ENCODE measurements at regions of chr3 and their contacts with region 1.

Region 1: DNA sequence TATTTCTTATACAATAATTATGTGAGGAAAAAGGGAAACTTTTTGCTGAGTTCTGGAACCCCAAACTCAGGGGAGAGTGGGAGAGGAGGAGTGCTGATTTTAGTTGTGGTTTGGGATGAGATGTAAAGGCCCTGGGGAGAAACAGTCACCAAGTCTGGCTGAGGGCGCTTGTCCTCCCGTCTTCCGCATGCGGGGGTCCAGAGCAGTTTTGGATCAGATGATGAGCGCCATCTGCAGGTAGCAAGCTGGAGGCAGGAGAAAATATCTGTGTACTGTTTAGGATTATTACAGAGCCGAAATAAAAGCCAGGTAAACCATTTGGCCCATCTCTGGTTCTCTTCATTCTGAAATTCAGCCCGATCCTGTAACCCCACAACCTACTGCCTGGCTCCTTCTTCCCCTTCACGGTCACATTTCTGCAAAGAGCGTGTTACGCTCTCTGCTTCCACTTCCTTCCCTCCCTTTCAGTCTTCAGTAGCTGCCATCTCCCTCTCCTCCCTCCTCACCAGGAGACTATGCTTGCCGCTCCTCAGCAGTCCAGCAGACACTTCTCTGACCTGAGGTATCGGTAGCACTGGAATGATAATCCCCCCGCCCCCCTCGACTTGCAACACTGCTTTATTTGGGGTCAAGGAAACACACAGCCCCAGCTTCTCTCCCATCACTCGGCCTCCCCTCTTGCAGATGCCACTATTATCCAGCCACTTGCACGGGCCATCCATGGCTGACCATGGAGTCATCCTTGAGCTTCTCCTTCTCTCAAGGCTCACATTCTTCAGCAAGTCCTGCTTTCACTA is 1.4 kb upstream of the PARP14 start:
- DNase-seq: peak; percentile 81
- H3K4me3 ChIP-seq: peak overlapping the region in 1 of 2 donors; percentile 73
- H3K27ac ChIP-seq: peak overlapping the region; percentile 96
- H3K4me1 ChIP-seq: no peaks in the 10 kb centered on the region
- H3K27me3 ChIP-seq: no peaks in the 10 kb centered on the region
- CTCF ChIP-seq: peak; percentile 70 to 93 (median 90)
- POLR2A ChIP-seq: no peak

Region 2: DNA sequence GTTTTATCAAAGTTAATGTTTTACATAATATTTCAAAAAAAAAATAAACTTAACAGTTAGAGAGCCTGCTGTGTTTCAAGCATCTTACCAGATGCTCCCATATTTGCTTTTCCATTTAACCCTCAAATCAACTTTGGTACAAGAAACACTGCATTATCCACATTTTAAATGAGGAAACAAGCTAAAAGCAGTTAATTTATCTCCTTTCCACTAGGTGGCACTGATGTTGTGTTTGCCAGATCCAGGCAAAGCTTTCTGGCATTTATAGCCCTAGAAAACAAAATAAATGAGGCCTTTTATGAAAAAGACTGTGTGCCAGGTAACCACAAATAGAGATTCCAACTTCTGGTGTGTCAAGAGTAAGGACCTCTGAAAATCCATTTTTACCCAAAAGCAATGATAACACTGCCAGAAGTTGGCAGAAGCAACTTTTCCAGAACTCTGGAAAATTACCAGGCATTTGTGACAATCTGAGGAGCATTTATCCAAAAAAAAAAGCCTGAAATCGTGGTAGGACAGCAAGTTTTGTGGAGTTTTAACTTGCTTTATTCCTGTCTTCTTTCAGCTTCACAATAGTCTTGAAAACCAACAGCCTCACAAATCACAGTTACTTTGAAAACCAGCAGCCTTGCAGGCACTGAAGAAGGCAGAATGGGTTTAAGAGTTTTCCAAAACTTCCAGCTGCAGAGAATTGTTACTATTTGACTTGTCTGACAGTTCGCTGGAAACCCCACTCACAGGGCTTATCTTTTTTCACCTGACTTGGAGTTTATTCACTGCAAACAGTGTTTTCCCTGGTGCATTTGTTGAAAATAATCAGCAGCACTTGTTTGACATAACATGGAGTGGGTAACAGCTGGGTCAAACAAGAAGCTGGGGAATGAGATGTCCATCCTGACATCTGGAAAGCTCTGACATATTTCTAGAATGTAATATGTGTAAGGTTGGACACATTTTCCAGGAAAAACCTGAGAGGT is 286.1 kb before region 1 on chr3:
- intact Hi-C with region 1: loop called (anchors 5 kb)
- DNase-seq: no peak
- H3K4me3 ChIP-seq: no peak overlapping the region
- H3K27ac ChIP-seq: peak overlapping the region; percentile 13 to 16
- H3K4me1 ChIP-seq: no peaks in the 10 kb centered on the region
- H3K27me3 ChIP-seq: no peaks in the 10 kb centered on the region
- CTCF ChIP-seq: peak; percentile 18 to 79 (median 64)
- POLR2A ChIP-seq: no peak

Region 3: DNA sequence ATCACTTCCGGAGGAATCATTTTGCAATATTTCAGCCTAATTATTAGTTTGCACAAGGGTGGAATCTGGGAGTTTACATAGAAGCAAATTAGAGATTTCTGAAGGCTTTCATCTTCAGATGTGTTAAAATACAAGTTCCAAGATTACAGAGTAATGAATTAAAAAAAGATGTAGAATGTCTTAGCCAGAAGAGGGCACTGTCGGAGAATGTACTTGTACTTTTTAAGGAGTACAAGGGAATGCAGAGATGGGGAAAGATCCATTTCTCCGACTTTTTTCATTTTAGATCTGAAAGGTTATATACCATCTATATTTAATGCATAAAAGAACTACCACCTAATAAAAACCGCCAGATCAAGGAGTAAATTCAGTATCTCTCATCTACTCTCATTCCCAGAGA is 220.3 kb before region 1 on chr3:
- intact Hi-C with region 1: loop called (anchors 2 kb)
- DNase-seq: no peak
- H3K4me3 ChIP-seq: no peak overlapping the region
- H3K27ac ChIP-seq: no peak overlapping the region
- H3K4me1 ChIP-seq: no peaks in the 10 kb centered on the region
- H3K27me3 ChIP-seq: no peaks in the 10 kb centered on the region
- CTCF ChIP-seq: peak in 3 of 4 experiments; percentile 40 to 55 (median 47)
- POLR2A ChIP-seq: no peak

Region 4: GRCh38 chr3:122564155-122564912 is 114.9 kb before region 1 on chr3 and contains the starts of genes DTX3L and PARP9:
- intact Hi-C with region 1: loop called (anchors 2 kb)
- DNase-seq: peak; percentile 81
- H3K4me3 ChIP-seq: peak within 1 kb of the TSS; percentile 76 to 78
- H3K27ac ChIP-seq: peak within 1 kb of the TSS; percentile 96
- H3K4me1 ChIP-seq: peaks cover 7% of the 10 kb centered on the region
- H3K27me3 ChIP-seq: no peaks in the 10 kb centered on the region
- CTCF ChIP-seq: no peak
- POLR2A ChIP-seq: peak; percentile 82
- total RNA-seq, gene DTX3L: 22.8 to 46.3 TPM
- total RNA-seq, gene PARP9: 30.4 to 41.7 TPM

Region 5: DNA sequence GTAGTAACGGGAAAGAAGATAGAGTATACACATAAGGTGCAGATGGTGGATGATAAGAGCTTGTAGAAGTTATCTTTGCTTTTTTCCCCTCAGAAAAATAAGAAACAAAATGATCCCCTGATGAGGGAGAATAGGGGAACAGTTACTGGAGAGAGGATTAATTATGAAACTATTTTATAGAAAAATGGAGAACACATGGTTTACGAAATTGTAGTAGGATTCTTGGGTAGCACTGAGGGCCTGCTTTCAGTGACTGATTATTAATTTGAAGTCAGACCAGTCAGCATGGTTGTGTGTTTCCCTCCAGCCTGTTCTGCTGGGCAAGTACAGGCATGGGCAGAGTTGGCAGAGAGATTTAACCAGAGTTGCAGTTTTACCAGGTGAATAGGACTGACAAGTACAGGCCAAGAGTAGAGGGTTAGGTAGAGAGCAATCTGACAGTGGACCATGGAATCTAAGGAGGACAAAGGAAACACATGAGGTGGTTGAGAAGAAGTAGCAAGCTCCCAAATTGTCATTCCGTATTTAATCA is 121.5 kb after region 1 on chr3:
- intact Hi-C with region 1: no loop called
- DNase-seq: peak; percentile 74
- H3K4me3 ChIP-seq: no peak overlapping the region
- H3K27ac ChIP-seq: peak overlapping the region in 1 of 2 donors; percentile 12
- H3K4me1 ChIP-seq: no peaks in the 10 kb centered on the region
- H3K27me3 ChIP-seq: no peaks in the 10 kb centered on the region
- CTCF ChIP-seq: no peak
- POLR2A ChIP-seq: no peak

Region 6: DNA sequence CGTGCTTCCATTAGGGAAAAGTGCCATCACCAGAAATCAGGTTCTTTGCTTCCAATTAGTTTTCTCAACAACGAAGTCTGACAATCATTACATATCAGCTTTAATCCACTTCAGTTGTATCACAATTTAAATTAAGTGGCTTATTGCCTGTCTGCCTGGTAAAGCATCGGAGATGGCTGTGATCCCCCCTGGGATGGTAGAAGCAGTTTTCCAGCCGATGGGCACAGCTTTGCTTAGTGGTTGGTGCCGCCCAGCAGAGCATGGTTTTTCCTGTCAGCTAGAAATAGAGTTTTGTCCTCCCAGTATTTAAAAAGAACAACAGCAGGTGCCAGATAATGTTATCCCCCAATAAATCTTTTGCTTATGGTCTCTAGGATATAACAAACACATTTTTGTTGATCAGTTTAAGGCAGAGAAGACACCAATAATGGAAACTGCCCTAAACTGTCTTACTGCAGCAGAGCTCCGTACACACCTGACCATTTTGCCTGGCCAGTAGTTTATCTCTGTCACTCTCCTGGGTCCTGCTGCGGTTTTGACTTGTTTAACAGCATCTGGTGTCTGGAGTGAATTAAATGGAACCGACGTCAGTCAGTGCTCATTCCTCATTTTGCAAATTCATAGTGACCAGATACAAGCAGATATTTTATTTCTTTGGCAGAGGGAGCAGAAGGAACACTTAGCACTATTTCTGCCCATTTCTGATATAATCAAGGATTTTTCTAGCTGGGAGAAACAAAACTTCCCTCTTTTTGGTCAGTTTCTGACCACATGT is 194.6 kb after region 1 on chr3:
- intact Hi-C with region 1: no loop called
- DNase-seq: no peak
- H3K4me3 ChIP-seq: no peak overlapping the region
- H3K27ac ChIP-seq: no peak overlapping the region
- H3K4me1 ChIP-seq: no peaks in the 10 kb centered on the region
- H3K27me3 ChIP-seq: no peaks in the 10 kb centered on the region
- CTCF ChIP-seq: no peak
- POLR2A ChIP-seq: no peak

Region 7: GRCh38 chr3:122890077-122890719 is 210.9 kb after region 1 on chr3:
- intact Hi-C with region 1: no loop called
- DNase-seq: peak; percentile 46
- H3K4me3 ChIP-seq: no peak overlapping the region
- H3K27ac ChIP-seq: no peak overlapping the region
- H3K4me1 ChIP-seq: no peaks in the 10 kb centered on the region
- H3K27me3 ChIP-seq: no peaks in the 10 kb centered on the region
- CTCF ChIP-seq: no peak
- POLR2A ChIP-seq: no peak

Measured in prostate gland (tissue), 2 donors.